Posterior vena cava (tissue), 2 donors: ENCODE measurements at regions of chr5 and their contacts with region 1.

Region 1: DNA sequence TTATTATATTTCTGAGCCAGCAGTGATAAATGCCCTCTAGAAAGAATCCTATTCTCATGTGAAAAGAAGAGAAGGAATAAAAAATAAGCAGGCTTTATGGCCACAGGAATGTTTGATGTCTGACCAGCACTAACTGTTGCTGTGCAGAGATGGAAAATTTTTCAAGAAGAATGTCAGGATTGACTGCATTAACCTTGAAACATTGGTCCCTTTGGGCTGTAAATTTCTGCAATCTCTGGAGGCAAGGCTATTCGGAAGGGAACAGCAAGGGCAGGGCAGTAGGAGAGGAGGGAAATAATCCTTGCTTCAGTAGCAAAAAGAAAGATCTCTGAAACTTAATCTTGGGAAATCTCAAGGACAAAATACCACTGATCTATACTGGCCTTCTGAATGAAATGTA is 415.2 kb downstream of the DNAH5 start:
- DNase-seq: no peak

Region 2: GRCh38 chr5:12175916-12176585 is 1353.2 kb before region 1 on chr5:
- intact Hi-C with region 1: loop called in 1 of 2 experiments (anchors 5 kb)
- DNase-seq: no peak

Region 3: DNA sequence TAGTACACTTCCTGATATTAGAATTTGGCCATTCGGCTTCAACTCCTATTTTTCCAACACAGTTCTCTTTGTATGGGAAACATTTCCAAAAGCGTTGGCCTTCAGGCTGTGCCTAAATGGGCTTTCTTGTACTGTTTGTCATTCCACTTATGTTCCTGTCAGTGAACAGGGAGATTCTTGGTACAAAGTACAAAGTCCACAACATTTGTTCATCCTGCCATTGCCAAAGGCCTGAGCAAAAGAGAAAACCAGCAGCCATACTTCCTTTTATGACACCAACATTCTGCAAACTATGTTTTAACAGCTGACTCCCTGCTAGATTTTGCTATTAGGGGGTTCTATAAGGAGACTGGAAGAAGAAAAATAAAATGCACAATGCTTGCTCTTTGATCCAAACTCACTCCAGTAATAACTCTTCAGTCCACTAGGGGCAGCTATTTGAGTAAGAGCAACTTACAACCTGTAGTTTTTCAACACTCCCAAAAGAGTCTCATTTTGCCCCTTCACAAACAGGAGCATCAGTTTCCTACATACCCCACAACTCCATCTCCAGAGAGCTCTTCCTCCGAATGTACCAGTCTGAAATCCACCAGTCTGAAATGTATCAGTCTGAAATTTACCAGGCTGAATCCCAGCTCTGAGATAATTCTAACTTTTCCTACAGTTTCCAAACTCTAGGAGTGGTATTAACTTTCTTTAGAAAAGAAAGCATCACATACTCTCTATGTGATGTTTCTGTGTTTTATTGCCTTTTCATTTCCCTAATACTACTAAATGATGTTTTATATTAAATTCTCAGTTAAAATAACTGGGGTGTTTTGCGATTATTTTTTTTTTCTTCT is 278.6 kb before region 1 on chr5:
- intact Hi-C with region 1: no loop called
- DNase-seq: no peak

Region 4: GRCh38 chr5:13510616-13511015 is 18.7 kb before region 1 on chr5:
- intact Hi-C with region 1: no loop called
- DNase-seq: no peak

Region 5: GRCh38 chr5:13613621-13614020 is 84.3 kb after region 1 on chr5:
- intact Hi-C with region 1: no loop called
- DNase-seq: no peak